HEK293T (cell line): ENCODE measurements at regions of chr3 and their contacts with region 1.

Region 1: GRCh38 chr3:44454258-44454657 is 23.2 kb downstream of the ZNF445 start:
- DNase-seq: no peak

Region 2: GRCh38 chr3:44862221-44862637 is 408.0 kb after region 1 on chr3:
- CTCF ChIA-PET with region 1: interaction called, 10 read pairs
- POLR2A ChIA-PET with region 1: no interaction called
- DNase-seq: no peak